ENCODE measurements at regions of chr12 and their contacts with region 1.

Region 1: DNA sequence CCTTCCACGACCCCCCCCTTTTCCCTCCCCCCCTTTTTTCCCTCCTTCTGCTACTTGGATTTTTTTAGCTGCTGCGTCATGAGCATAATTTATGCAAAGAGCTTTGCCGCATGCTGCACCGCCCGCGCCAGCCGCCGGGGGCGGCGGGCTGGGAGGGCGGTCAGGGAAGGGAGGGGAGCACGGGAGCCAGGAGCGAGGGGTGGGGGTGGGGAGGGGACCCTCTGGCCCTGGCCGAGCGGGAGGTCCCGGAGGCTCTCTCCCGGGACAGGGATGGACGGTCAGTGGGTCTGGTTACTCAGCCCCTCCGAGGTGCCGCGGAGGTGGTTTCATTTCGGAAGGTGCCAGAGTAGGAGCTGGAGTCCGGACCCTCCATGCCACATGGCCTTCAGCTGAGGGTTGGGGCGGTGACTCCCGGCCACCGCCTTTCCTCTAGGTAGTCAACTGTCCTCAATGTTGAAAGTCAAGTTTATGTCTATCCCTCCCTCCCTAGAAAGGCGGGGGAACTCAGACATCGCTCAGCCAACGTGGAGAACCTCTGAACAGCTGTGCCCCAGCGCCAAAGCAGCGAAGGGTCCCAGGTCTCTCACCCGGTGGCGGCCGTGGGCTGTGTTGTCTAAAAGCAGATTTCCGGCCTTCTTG is at the start of gene POU6F1:
- DNase-seq: peak in 1 of 2 experiments; percentile 73
- H3K4me3 ChIP-seq: peak within 1 kb of the TSS; percentile 44 to 85 (median 70)
- H3K27ac ChIP-seq: peak within 1 kb of the TSS; percentile 74; the same call in 1 of the 2 replicates
- H3K4me1 ChIP-seq: peaks cover 0 to 10% (median 7%) of the 10 kb centered on the region in 4 experiments; a peak in 5 of 7 replicates
- H3K27me3 ChIP-seq: no peaks in the 10 kb centered on the region
- CTCF ChIP-seq: peak; percentile 29 to 56 (median 48)
- EP300 ChIP-seq: peak in 1 of 2 experiments; percentile 64; a peak in 1 of 3 replicates
- POLR2A ChIP-seq: peak in 1 of 2 experiments; percentile 62; a peak in 1 of 3 replicates
- RAD21 ChIP-seq: peak in 1 of 2 experiments; percentile 38; a peak in 2 of 4 replicates
- total RNA-seq, gene POU6F1: 6.8 and 8.7 TPM in 2 replicates

Region 2: DNA sequence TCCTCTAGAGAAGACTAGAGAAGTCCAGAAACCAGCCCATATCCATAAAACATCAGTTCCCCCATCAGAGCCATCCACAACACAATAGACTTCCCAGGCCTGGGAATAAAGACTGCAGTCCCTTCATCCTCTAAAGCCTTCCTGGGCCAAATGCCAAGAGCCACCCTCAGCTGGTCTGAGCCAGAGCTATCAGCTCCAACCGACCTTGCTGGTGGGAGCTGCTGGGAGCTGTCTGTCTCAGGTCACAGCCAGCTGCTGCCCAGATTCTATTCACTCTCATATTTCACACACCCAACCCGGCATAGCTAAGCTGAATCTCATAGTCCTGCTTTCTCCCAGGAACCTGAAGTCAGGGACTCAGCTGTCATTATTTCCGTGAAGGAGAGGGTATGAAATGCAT is 34.3 kb before region 1 on chr12:
- CTCF ChIA-PET with region 1: no interaction called
- POLR2A ChIA-PET with region 1: no interaction called
- DNase-seq: no peak
- H3K4me3 ChIP-seq: no peak overlapping the region
- H3K27ac ChIP-seq: no peak overlapping the region
- H3K4me1 ChIP-seq: no peaks in the 10 kb centered on the region
- H3K27me3 ChIP-seq: no peaks in the 10 kb centered on the region
- CTCF ChIP-seq: no peak
- EP300 ChIP-seq: no peak
- POLR2A ChIP-seq: no peak
- RAD21 ChIP-seq: no peak

Region 3: DNA sequence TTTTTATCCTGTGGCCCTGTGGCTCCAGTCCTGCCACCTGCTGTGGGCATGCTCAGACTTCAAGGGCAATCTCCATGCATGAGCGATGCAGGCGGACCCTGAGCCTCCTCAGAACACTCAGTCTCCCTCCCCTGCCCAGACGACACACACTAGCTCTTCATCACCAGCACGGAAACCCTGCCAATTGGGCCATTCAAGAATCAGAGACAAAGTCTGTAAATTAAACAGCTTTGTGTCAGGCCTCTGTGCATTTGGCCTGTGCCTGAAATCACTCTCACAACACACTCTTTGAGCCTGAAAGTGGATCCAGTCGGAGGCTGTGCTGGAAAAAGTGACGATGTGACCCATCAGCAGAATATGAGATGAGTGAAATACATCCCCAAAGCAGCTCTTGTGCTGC is 12.7 kb before region 1 on chr12:
- CTCF ChIA-PET with region 1: interaction called, 10 read pairs
- POLR2A ChIA-PET with region 1: interaction called, 12 read pairs
- DNase-seq: no peak
- H3K4me3 ChIP-seq: no peak overlapping the region
- H3K27ac ChIP-seq: no peak overlapping the region
- H3K4me1 ChIP-seq: no peaks in the 10 kb centered on the region
- H3K27me3 ChIP-seq: no peaks in the 10 kb centered on the region; a peak in 1 of 7 replicates
- CTCF ChIP-seq: no peak
- EP300 ChIP-seq: no peak
- POLR2A ChIP-seq: no peak
- RAD21 ChIP-seq: no peak

Region 4: DNA sequence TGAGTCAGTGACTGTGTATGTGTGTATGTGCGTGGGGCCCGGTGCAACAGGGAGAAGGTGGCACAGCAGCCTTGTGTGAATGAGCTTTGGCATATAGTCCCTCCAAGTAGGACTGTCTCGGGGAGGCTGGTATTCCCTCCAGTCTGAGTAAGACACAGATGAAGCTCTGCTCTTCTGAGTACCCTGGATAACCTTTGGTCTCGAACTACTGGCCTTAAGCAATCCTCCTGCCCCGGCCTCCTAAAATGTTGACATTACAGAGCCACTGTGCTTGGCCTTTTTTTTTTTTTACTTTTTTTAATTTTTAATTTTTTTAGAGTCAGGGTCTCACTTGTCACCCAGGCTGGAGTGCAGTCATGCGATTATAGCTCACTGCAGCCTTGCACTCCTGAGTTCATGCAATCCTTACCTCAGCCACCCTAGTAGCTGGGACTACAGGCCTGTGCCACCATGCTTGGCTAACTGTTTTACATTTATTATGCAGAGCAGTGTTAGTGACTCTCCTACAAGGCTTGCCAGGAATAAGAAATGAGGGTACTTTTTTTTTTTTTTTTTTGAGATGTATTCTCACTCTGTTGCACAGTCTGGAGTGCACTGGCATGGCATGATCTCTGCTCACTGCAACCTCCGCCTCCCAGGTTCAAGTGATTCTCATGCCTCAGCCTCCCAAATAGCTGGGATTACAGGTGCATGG is 11.2 kb after region 1 on chr12:
- CTCF ChIA-PET with region 1: interaction called, 14 read pairs
- POLR2A ChIA-PET with region 1: interaction called, 22 read pairs
- DNase-seq: no peak
- H3K4me3 ChIP-seq: no peak overlapping the region
- H3K27ac ChIP-seq: no peak overlapping the region
- H3K4me1 ChIP-seq: no peaks in the 10 kb centered on the region
- H3K27me3 ChIP-seq: no peaks in the 10 kb centered on the region
- CTCF ChIP-seq: no peak
- EP300 ChIP-seq: no peak
- POLR2A ChIP-seq: no peak
- RAD21 ChIP-seq: no peak

Region 5: GRCh38 chr12:51238510-51239334 is 20.6 kb after region 1 on chr12 and contains the start of gene DAZAP2:
- CTCF ChIA-PET with region 1: interaction called, 8 read pairs
- POLR2A ChIA-PET with region 1: interaction called, 21 read pairs
- DNase-seq: peak; percentile 89 to 92
- H3K4me3 ChIP-seq: peak within 1 kb of the TSS; percentile 90 to 100 (median 99)
- H3K27ac ChIP-seq: peak within 1 kb of the TSS; percentile 99
- H3K4me1 ChIP-seq: peaks cover 0 to 9% (median 5%) of the 10 kb centered on the region in 4 experiments; a peak in 6 of 7 replicates
- H3K27me3 ChIP-seq: no peaks in the 10 kb centered on the region
- CTCF ChIP-seq: peak in 1 of 3 experiments; percentile 7; a peak in 1 of 4 replicates
- EP300 ChIP-seq: peak in 1 of 2 experiments; percentile 32; a peak in 1 of 3 replicates
- POLR2A ChIP-seq: peak; percentile 69 to 92
- RAD21 ChIP-seq: no peak
- total RNA-seq, gene DAZAP2: 24.9 and 27.1 TPM in 2 replicates

Region 6: DNA sequence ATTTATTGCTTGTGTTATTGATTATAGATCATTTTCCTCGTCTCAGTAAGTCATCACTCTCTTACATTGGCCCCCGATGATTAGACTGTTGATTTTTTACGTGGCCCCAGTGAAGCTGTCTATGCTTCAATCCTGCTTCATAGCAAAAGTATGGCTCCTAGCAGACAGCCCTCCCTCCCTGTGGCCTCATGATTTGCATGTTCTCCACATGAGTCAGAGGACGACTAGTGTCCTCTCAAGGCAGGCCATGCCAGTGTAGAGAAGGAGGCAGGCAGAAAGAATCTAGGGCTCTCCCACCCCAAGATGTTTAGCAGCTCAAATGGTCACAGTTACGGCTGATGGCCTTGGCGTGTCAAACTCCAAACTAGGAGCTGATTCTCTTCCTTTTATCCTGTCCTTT is 570.8 kb after region 1 on chr12:
- CTCF ChIA-PET with region 1: no interaction called
- POLR2A ChIA-PET with region 1: no interaction called
- DNase-seq: no peak
- H3K4me3 ChIP-seq: no peak overlapping the region
- H3K27ac ChIP-seq: no peak overlapping the region
- H3K4me1 ChIP-seq: no peaks in the 10 kb centered on the region
- H3K27me3 ChIP-seq: no peaks in the 10 kb centered on the region
- CTCF ChIP-seq: no peak
- EP300 ChIP-seq: no peak
- POLR2A ChIP-seq: no peak
- RAD21 ChIP-seq: no peak

Measured in H1 (cell line).